ENCODE measurements at regions of chr7 and their contacts with region 1.

Region 1: GRCh38 chr7:30062591-30062990 is 34.4 kb downstream of the PLEKHA8 start:
- DNase-seq: peak in 1 of 2 experiments; percentile 55
- H3K4me3 ChIP-seq: no peak overlapping the region
- H3K4me1 ChIP-seq: no peaks in the 10 kb centered on the region
- H3K27me3 ChIP-seq: no peaks in the 10 kb centered on the region

Region 2: DNA sequence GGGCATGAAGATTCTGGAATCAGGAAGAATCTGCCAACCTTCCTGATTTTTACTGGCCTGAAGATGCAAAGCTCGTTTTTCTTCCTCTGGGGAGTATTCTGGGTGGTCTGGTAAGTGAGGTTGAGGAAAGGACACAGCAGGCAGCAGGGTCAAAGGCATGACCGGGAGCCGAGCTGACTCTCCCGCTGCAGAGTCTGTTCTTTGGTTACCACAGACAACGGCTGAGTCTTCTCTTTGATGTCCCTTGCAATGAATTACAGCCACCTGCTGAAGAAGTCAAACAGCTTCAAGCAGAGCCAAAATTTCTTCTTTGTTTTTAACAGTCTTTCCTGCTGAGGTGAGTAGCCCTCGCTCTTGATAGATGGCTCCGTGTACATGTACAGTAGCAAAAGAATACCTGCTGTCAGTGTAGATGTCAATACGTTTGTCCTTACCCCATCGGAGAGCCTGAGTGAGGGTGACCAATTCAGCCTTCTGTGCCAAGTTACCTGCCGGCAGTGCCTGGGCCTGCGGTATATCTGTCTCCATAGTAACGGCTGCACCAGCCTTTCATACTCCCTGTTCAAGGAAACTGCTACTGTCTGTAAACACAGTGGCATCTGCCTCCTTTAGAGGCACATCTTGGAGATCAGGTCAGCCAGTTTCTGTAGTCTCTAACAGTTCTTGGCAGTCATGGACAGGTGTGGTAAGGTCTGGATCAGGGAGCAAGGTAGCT is 422.6 kb before region 1 on chr7:
- in situ Hi-C with region 1: loop called (anchors 25 kb)
- DNase-seq: no peak
- H3K4me3 ChIP-seq: no peak overlapping the region
- H3K4me1 ChIP-seq: no peaks in the 10 kb centered on the region
- H3K27me3 ChIP-seq: no peaks in the 10 kb centered on the region

Region 3: DNA sequence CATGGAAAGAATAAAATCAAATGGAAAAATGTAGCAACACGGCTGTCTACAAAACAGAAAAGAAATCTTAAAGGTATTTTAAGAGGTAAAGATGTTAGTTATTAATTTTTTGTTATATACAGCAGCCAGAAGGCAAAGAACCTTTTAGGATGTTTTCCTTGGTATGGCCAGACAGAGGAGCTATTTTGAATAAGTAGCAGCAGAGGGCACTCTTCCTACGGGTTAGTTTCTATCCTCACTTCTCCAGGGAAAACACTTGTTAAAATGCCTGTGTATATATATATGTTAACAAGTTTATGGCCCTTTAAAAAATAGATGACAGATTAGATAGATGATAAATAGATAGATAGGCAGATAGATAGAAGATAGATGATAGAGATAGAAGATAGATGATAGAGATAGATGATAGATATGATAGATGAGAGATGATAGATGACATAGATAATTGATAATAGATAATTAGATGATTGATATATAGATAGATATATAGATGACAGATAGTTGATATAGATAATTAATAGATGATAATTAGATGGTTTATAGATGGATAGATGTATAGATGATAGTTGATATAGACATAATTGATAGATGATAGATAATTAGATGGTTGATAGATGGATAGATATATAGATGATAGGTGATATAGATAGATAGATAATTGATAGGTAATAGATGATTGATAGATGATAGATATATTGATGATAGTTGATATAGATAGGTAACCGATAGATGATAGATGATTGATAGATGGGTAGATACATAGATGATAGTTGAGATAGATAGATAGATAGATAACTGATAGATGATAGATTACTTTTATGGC is 314.1 kb before region 1 on chr7:
- in situ Hi-C with region 1: loop called (anchors 25 kb)
- DNase-seq: peak in 1 of 2 experiments; percentile 82
- H3K4me3 ChIP-seq: no peak overlapping the region
- H3K4me1 ChIP-seq: no peaks in the 10 kb centered on the region
- H3K27me3 ChIP-seq: no peaks in the 10 kb centered on the region

Region 4: GRCh38 chr7:29955799-29956486 is 106.6 kb before region 1 on chr7:
- in situ Hi-C with region 1: loop called (anchors 10 kb)
- DNase-seq: no peak
- H3K4me3 ChIP-seq: no peak overlapping the region
- H3K4me1 ChIP-seq: no peaks in the 10 kb centered on the region; the same call in 1 of the 2 replicates
- H3K27me3 ChIP-seq: no peaks in the 10 kb centered on the region

Region 5: DNA sequence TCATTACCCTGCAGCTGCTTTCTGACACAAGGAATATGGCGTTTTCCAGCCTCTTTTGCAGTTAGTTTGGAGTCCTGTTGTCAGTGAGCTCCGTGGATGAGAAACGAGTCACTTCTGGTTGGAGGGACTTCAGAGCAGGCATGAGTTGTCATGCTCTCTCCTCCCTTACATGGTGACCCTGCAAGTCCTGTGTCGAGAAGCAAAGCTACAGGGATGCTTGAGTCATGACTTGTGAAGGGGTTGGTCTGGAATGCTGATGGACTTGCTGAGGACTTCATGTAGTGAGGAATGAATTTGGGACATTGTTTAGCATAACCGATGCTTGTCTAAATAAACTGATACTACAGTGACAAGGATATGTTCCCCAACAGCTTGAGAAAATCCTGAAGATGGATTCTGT is 1098.3 kb after region 1 on chr7:
- in situ Hi-C with region 1: no loop called
- DNase-seq: no peak
- H3K4me3 ChIP-seq: no peak overlapping the region
- H3K4me1 ChIP-seq: no peaks in the 10 kb centered on the region
- H3K27me3 ChIP-seq: no peaks in the 10 kb centered on the region

Measured in HAP-1 (cell line).